PC-9 (cell line): ENCODE measurements at regions of chr2 and their contacts with region 1.

Region 1: GRCh38 chr2:55718165-55719008 is 24.7 kb upstream of the PNPT1 start:
- DNase-seq: peak; percentile 53 to 58
- H3K4me3 ChIP-seq: no peak overlapping the region
- H3K27ac ChIP-seq: no peak overlapping the region
- H3K4me1 ChIP-seq: peaks cover 17% of the 10 kb centered on the region
- H3K27me3 ChIP-seq: no peaks in the 10 kb centered on the region
- CTCF ChIP-seq: peak; percentile 97

Region 2: GRCh38 chr2:56009758-56010458 is 291.5 kb after region 1 on chr2:
- CTCF ChIA-PET with region 1: no interaction called
- POLR2A ChIA-PET with region 1: no interaction called
- intact Hi-C with region 1: loop called (anchors 1 kb)
- DNase-seq: peak in 1 of 2 experiments; percentile 63
- H3K4me3 ChIP-seq: no peak overlapping the region
- H3K27ac ChIP-seq: no peak overlapping the region
- H3K4me1 ChIP-seq: no peaks in the 10 kb centered on the region
- H3K27me3 ChIP-seq: no peaks in the 10 kb centered on the region
- CTCF ChIP-seq: peak; percentile 89

Region 3: GRCh38 chr2:57516698-57517340 is 1798.4 kb after region 1 on chr2:
- CTCF ChIA-PET with region 1: interaction called, 10 read pairs
- POLR2A ChIA-PET with region 1: no interaction called
- intact Hi-C with region 1: loop called (anchors 10 kb)
- DNase-seq: peak in 1 of 2 experiments; percentile 51
- H3K4me3 ChIP-seq: no peak overlapping the region
- H3K27ac ChIP-seq: no peak overlapping the region
- H3K4me1 ChIP-seq: no peaks in the 10 kb centered on the region
- H3K27me3 ChIP-seq: no peaks in the 10 kb centered on the region
- CTCF ChIP-seq: peak; percentile 86